CD8-positive, alpha-beta T cell (primary cell): ENCODE measurements at regions of chrX and their contacts with region 1.

Region 1: GRCh38 chrX:15471016-15471415 is 22.1 kb downstream of the PIR start:
- DNase-seq: peak; percentile 1 to 66 (median 40)
- ATAC-seq: peak; percentile 56
- H3K4me3 ChIP-seq: no peak overlapping the region
- H3K4me3 Mint-ChIP-seq: no peak overlapping the region
- H3K27ac ChIP-seq: no peak overlapping the region
- H3K27ac Mint-ChIP-seq: no peak overlapping the region
- H3K4me1 ChIP-seq: no peaks in the 10 kb centered on the region
- H3K4me1 Mint-ChIP-seq: no peaks in the 10 kb centered on the region
- H3K27me3 ChIP-seq: no peaks in the 10 kb centered on the region
- H3K27me3 Mint-ChIP-seq: peaks cover 5% of the 10 kb centered on the region
- CTCF ChIP-seq: peak; percentile 58

Region 2: GRCh38 chrX:14039344-14039743 is 1431.7 kb before region 1 on chrX:
- CTCF ChIA-PET with region 1: no interaction called
- POLR2A ChIA-PET with region 1: no interaction called
- intact Hi-C with region 1: loop called in 1 of 2 experiments (anchors 5 kb)
- DNase-seq: peak; percentile 5 to 74 (median 57)
- ATAC-seq: peak; percentile 82
- H3K4me3 ChIP-seq: no peak overlapping the region
- H3K4me3 Mint-ChIP-seq: no peak overlapping the region
- H3K27ac ChIP-seq: no peak overlapping the region
- H3K27ac Mint-ChIP-seq: no peak overlapping the region
- H3K4me1 ChIP-seq: no peaks in the 10 kb centered on the region
- H3K4me1 Mint-ChIP-seq: no peaks in the 10 kb centered on the region
- H3K27me3 ChIP-seq: no peaks in the 10 kb centered on the region
- H3K27me3 Mint-ChIP-seq: no peaks in the 10 kb centered on the region
- CTCF ChIP-seq: peak; percentile 64

Region 3: DNA sequence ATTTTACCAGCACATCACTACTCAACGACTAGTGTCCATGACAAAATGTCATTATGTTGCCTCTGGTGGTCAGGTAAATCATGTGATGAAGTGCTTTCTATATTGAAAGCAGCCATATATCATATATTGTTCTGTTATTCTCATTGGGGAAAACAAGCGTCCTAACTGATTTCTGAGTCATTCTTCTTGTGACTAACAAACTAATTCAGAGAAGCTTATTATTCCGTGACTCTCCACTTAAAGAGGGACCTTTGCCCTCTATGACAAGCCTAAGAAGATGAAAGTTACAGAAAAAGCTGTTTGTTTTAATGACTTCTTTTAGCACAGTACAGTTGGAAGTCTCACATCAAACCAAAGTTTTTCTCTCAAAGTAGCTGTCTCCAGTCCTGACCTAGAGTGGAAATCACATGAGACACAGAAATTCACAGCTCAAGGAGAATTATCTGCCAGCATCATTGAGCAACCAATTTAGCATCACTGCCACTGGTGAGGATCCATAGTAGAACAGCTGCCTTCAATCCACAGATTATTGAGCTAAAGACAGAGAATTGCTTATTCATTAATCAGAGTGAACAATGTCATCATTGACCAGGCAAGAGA is 237.5 kb before region 1 on chrX:
- CTCF ChIA-PET with region 1: no interaction called
- POLR2A ChIA-PET with region 1: no interaction called
- intact Hi-C with region 1: no loop called
- DNase-seq: no peak
- ATAC-seq: no peak
- H3K4me3 ChIP-seq: no peak overlapping the region
- H3K4me3 Mint-ChIP-seq: no peak overlapping the region
- H3K27ac ChIP-seq: no peak overlapping the region
- H3K27ac Mint-ChIP-seq: no peak overlapping the region
- H3K4me1 ChIP-seq: no peaks in the 10 kb centered on the region
- H3K4me1 Mint-ChIP-seq: no peaks in the 10 kb centered on the region
- H3K27me3 ChIP-seq: no peaks in the 10 kb centered on the region
- H3K27me3 Mint-ChIP-seq: peaks cover 5% of the 10 kb centered on the region
- CTCF ChIP-seq: no peak

Region 4: DNA sequence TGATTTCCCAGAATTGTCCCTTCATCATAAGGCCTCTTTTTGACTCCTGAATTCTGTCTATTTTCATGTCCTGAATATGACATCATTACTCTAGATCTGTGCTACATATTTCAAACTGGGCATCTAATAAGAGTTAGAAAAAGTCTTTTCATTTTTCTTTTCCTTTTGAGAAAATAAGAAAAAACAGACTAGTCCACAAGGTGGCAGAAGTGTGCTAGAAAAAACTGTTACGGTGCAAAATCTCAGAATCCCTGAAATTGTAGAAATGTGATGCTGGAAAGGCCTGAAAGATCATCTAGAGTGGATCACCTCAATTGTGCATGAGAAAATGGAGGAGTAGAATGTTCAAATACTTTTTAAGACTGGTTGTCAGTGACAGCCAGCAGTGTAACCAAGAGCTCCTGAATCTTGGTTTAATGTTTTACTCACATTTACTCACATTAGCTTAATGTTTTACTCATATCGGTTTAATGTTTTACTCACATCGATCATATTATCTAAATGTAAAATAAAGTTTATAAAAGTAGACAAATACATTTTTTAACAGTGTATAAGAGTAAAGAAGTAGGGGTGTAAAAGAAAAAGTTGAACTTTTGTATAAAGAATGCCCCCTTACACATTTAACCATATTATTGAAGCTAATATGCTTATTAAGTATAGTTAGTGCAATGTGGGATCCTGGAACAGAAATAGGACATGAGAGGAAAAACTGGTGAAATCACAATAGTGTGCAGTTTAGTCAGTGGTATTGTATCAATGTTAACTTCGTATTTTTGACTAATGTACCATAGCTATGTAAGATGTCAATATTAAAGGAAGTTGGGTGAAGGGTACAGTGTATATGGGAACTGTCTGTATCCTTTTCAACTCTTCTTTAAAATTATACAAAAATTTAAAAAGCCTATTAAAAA is 170.8 kb before region 1 on chrX:
- CTCF ChIA-PET with region 1: interaction called, 4 read pairs
- POLR2A ChIA-PET with region 1: no interaction called
- intact Hi-C with region 1: loop called (anchors 2 to 5 kb)
- DNase-seq: peak in 2 of 9 experiments; percentile 10 to 19
- ATAC-seq: no peak
- H3K4me3 ChIP-seq: no peak overlapping the region
- H3K4me3 Mint-ChIP-seq: no peak overlapping the region
- H3K27ac ChIP-seq: no peak overlapping the region
- H3K27ac Mint-ChIP-seq: no peak overlapping the region
- H3K4me1 ChIP-seq: no peaks in the 10 kb centered on the region
- H3K4me1 Mint-ChIP-seq: peaks cover 2% of the 10 kb centered on the region
- H3K27me3 ChIP-seq: no peaks in the 10 kb centered on the region
- H3K27me3 Mint-ChIP-seq: no peaks in the 10 kb centered on the region
- CTCF ChIP-seq: peak; percentile 46

Region 5: GRCh38 chrX:15349046-15349445 is 122.0 kb before region 1 on chrX:
- CTCF ChIA-PET with region 1: interaction called, 3 read pairs
- POLR2A ChIA-PET with region 1: no interaction called
- intact Hi-C with region 1: loop called (anchors 1 to 2 kb)
- DNase-seq: peak in 4 of 9 experiments; percentile 4 to 53 (median 26)
- ATAC-seq: peak; percentile 31
- H3K4me3 ChIP-seq: no peak overlapping the region
- H3K4me3 Mint-ChIP-seq: no peak overlapping the region
- H3K27ac ChIP-seq: no peak overlapping the region
- H3K27ac Mint-ChIP-seq: no peak overlapping the region
- H3K4me1 ChIP-seq: no peaks in the 10 kb centered on the region
- H3K4me1 Mint-ChIP-seq: no peaks in the 10 kb centered on the region
- H3K27me3 ChIP-seq: no peaks in the 10 kb centered on the region
- H3K27me3 Mint-ChIP-seq: peaks cover 2% of the 10 kb centered on the region
- CTCF ChIP-seq: no peak

Region 6: DNA sequence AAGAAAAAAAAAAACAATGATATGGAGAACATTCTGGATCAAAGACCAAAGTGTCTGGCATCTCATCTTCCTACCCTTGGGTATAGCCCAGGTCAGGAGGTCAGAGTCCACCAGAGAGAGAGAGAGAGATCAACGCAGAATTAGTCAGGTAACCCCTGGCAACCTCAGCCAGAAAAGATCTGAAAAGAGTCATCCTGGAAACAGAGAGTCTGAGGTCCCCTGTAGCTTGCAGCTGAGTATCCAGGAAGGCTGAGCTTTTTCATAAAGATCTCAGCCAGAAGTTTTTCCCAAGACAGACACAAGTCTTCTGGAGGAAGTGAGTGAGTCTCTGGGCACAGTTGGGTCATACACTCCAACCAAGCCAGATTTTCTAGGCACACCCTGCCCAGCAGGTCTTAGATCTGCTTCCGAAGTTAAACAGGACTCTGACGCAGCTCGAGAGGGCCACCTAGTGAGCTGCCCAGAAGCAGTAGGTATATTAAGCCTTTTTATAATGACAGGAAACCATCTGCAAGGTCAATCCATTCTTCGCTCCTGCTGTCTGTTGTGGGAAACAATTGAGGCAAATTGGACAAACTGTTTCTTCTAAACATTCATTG is 94.1 kb after region 1 on chrX:
- CTCF ChIA-PET with region 1: no interaction called
- POLR2A ChIA-PET with region 1: no interaction called
- intact Hi-C with region 1: loop called in 1 of 2 experiments (anchors 10 kb)
- DNase-seq: peak in 3 of 9 experiments; percentile 4 to 31 (median 31)
- ATAC-seq: no peak
- H3K4me3 ChIP-seq: no peak overlapping the region
- H3K4me3 Mint-ChIP-seq: no peak overlapping the region
- H3K27ac ChIP-seq: no peak overlapping the region
- H3K27ac Mint-ChIP-seq: no peak overlapping the region
- H3K4me1 ChIP-seq: no peaks in the 10 kb centered on the region
- H3K4me1 Mint-ChIP-seq: no peaks in the 10 kb centered on the region
- H3K27me3 ChIP-seq: no peaks in the 10 kb centered on the region
- H3K27me3 Mint-ChIP-seq: peaks cover 10% of the 10 kb centered on the region
- CTCF ChIP-seq: no peak